ENCODE measurements at regions of chr17 and their contacts with region 1.

Region 1: GRCh38 chr17:4997302-4998026 is at the starts of genes INCA1 and KIF1C:
- DNase-seq: peak; percentile 21
- H3K4me3 ChIP-seq: peak within 1 kb of the TSS; percentile 96
- CTCF ChIP-seq: no peak

Region 2: GRCh38 chr17:4739122-4740024 is 258.1 kb before region 1 on chr17 and contains the starts of genes CXCL16 and ZMYND15:
- CTCF ChIA-PET with region 1: no interaction called
- POLR2A ChIA-PET with region 1: no interaction called
- DNase-seq: no peak
- H3K4me3 ChIP-seq: peak within 1 kb of the TSS; percentile 66
- CTCF ChIP-seq: no peak

Region 3: DNA sequence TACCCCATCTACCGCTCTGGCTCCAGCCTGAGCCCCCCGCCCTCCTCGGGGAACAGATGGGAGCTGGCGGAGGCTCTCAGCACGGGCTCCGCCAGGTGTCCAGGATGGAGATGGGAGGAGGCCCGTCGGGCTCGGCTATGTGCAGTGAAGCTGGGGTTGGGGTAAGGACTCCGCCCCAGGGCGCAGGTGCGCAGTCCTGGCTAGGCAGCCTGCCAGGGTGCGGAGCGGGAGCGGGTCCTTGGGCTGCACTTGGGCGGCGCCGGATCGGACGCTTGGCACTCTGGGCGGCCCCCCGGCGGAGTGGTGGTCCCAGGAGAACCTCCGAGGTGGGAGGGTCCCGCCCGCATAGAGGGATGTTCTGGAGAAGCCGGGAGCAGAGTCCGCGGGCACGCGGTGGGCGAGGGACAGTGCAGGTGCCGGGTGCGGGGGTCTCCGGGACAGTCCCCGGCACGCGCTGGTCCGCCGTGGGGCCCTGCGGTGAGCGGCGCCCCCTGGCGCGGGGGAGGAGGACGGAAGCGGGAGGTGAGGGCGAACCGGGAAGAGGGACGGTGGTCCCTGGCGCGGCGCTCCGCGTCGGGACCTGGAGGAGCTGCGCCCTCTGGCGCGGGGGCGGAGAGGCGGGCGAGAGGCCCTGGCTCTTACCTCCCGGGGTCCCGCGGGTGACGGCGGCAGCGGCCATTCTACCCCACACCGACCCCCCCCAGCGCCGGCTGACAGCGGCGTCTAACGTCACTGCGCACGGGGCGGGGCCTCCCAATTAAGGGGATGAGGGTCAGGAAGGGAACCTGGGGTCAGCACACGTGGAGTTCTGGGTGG is 10.3 kb before region 1 on chr17 and contains the start of gene CAMTA2:
- CTCF ChIA-PET with region 1: interaction called, 17 read pairs
- POLR2A ChIA-PET with region 1: interaction called, 14 read pairs
- DNase-seq: no peak
- H3K4me3 ChIP-seq: peak within 1 kb of the TSS; percentile 81
- CTCF ChIP-seq: peak; percentile 76